Activated CD4-positive, alpha-beta memory T cell treated with anti-CD3 and anti-CD28 coated beads, Interleukin-2, amount 10 ng/mL, durations not matched to agents 7 days and 5 days (primary cell): ENCODE measurements at regions of chr17 and their contacts with region 1.

Region 1: DNA sequence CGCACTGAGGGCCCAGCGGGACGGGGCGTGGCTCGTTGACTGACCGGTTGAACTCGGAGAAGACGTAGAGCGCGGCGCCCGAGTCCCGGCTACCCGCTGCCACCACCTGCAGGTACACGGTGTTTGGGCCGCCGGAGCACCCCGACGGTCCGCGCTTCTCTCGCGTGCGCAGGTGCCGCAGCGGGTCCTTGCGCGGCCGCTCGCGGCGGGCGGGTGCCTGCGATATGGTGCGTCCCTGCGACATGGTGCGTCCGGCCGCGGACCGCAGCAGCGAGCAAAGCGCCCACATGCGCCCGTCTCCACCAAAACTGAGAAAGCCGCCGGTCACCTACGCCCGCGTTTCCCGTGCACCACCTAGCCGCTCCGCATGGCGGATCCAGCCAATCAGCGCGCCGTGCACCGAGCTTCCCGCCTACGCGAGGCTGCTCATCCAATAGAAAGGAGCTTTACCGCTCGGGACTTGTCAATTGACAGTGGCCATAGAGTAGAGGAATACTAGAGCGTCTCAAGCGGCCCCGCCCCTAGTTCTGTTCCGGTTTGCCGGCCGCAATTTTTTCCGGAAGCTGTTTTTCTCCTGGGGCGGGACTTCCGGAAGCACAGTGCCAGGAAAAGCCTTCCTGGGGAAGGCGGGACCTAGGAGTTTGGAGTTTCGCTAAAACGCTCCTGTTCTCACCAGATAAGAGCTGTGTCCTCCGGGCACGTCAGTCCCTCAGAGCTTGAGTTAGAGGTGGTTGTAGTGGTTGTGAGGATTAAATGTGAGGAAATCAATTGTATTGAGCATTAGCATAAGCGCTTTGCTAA is at the start of gene ELAC2:
- DNase-seq: peak; percentile 96
- H3K4me3 Mint-ChIP-seq: peak within 1 kb of the TSS; percentile 96
- H3K27ac Mint-ChIP-seq: peak within 1 kb of the TSS; percentile 89
- H3K4me1 Mint-ChIP-seq: peaks cover 32% of the 10 kb centered on the region
- H3K27me3 Mint-ChIP-seq: no peaks in the 10 kb centered on the region
- total RNA-seq, gene ELAC2: 50.8 to 54.0 TPM

Region 2: GRCh38 chr17:13002766-13003451 is 14.9 kb before region 1 on chr17:
- CTCF ChIA-PET with region 1: interaction called, 26 read pairs
- POLR2A ChIA-PET with region 1: interaction called, 17 read pairs
- DNase-seq: peak; percentile 44
- H3K4me3 Mint-ChIP-seq: no peak overlapping the region
- H3K27ac Mint-ChIP-seq: no peak overlapping the region
- H3K4me1 Mint-ChIP-seq: no peaks in the 10 kb centered on the region
- H3K27me3 Mint-ChIP-seq: no peaks in the 10 kb centered on the region

Region 3: DNA sequence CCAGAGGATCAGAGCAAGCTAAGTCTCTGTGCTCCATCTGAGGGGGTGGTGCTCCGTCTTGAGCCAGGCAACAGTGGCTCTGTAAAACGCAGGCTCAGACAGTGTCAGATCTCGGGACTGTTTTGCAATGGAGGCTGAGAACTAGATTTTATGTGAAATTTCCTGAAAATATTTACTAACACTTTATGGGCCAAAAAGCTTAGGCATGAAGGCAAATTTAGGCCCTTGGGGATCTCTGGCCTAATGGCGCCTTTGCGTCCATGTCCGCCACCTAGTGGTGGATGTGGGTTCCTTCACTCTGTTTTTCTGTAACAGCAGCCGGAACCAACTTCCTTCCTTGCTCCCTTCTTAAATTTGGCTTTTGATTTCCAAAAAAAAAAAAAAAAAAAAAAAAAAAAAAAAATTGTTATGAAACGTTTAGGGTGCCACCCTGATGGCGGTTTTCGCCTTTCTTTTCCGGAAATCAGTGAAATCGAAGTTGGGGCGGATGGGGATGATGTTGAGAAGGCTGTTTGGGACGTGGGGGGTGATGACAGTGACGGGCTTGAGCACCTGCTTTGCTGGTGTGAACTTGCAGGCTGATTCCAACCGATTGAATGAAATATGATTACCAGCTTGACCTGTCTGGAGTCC is 14.0 kb after region 1 on chr17:
- CTCF ChIA-PET with region 1: interaction called, 189 read pairs
- POLR2A ChIA-PET with region 1: interaction called, 30 read pairs
- DNase-seq: peak; percentile 55
- H3K4me3 Mint-ChIP-seq: no peak overlapping the region
- H3K27ac Mint-ChIP-seq: no peak overlapping the region
- H3K4me1 Mint-ChIP-seq: peaks cover 4% of the 10 kb centered on the region
- H3K27me3 Mint-ChIP-seq: peaks cover 4% of the 10 kb centered on the region